Heart left ventricle (tissue), 16 donors: ENCODE measurements at regions of chr11 and their contacts with region 1.

Region 1: GRCh38 chr11:122505304-122506006 is 150.1 kb upstream of the UBASH3B start:
- DNase-seq: peak; percentile 79 to 82 (median 80)
- ATAC-seq: peak; percentile 91 to 99 (median 98)
- H3K4me3 ChIP-seq: no peak overlapping the region
- H3K27ac ChIP-seq: no peak overlapping the region
- H3K4me1 ChIP-seq: peaks cover 0 to 11% (median 4%) of the 10 kb centered on the region in 12 donors
- H3K27me3 ChIP-seq: no peaks in the 10 kb centered on the region
- CTCF ChIP-seq: peak; percentile 73 to 93 (median 87)
- POLR2A ChIP-seq: no peak

Region 2: GRCh38 chr11:122020902-122021301 is 484.6 kb before region 1 on chr11:
- intact Hi-C with region 1: loop called in 5 of 10 experiments (anchors 2 to 10 kb)
- DNase-seq: no peak
- ATAC-seq: no peak
- H3K4me3 ChIP-seq: no peak overlapping the region
- H3K27ac ChIP-seq: no peak overlapping the region
- H3K4me1 ChIP-seq: peaks cover 0 to 9% (median 0%) of the 10 kb centered on the region in 12 donors
- H3K27me3 ChIP-seq: no peaks in the 10 kb centered on the region
- CTCF ChIP-seq: peak; percentile 19 to 61 (median 44)
- POLR2A ChIP-seq: no peak

Region 3: DNA sequence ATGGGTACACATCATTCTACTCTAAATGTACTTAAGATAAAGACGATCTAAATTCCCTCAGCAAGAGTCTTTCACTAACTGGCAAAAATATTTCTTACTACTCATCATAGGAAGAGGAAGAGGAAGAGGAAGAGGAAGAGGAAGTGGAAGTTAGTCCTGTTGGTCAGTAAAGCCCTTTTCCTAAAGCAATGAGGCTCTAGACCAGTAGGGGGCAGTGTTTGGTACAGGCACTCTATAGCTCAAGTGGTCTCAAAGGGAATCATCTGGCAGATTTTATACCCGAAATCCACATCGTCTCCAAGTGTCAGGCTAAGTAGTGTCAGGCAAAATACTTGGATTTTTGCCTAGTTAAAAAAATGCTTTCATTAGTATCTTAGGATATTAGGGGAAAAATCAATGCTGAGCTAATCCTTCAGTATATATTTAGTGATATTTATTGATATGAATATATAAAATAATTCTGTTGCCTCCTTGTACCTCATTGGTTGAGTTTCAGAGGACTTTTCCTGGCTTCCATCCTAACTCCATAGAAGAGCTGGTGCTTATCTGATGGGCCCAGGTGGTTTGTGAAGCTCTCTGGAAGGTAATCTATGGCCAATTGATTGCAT is 397.2 kb before region 1 on chr11:
- intact Hi-C with region 1: loop called in 9 of 10 experiments (anchors 5 to 10 kb)
- DNase-seq: no peak
- ATAC-seq: no peak
- H3K4me3 ChIP-seq: no peak overlapping the region
- H3K27ac ChIP-seq: peak overlapping the region in 10 of 12 donors; percentile 46 to 85 (median 63)
- H3K4me1 ChIP-seq: peaks cover 0 to 33% (median 10%) of the 10 kb centered on the region in 12 donors
- H3K27me3 ChIP-seq: no peaks in the 10 kb centered on the region
- CTCF ChIP-seq: peak; percentile 29 to 59 (median 46)
- POLR2A ChIP-seq: no peak

Region 4: GRCh38 chr11:122215244-122215992 is 290.0 kb before region 1 on chr11:
- intact Hi-C with region 1: loop called (anchors 1 to 5 kb)
- DNase-seq: peak; percentile 70 to 90 (median 79)
- ATAC-seq: peak; percentile 89 to 97 (median 94)
- H3K4me3 ChIP-seq: no peak overlapping the region
- H3K27ac ChIP-seq: peak overlapping the region in 9 of 12 donors; percentile 1 to 47 (median 38)
- H3K4me1 ChIP-seq: peaks cover 0 to 26% (median 10%) of the 10 kb centered on the region in 12 donors
- H3K27me3 ChIP-seq: no peaks in the 10 kb centered on the region
- CTCF ChIP-seq: peak; percentile 85 to 97 (median 94)
- POLR2A ChIP-seq: no peak

Region 5: DNA sequence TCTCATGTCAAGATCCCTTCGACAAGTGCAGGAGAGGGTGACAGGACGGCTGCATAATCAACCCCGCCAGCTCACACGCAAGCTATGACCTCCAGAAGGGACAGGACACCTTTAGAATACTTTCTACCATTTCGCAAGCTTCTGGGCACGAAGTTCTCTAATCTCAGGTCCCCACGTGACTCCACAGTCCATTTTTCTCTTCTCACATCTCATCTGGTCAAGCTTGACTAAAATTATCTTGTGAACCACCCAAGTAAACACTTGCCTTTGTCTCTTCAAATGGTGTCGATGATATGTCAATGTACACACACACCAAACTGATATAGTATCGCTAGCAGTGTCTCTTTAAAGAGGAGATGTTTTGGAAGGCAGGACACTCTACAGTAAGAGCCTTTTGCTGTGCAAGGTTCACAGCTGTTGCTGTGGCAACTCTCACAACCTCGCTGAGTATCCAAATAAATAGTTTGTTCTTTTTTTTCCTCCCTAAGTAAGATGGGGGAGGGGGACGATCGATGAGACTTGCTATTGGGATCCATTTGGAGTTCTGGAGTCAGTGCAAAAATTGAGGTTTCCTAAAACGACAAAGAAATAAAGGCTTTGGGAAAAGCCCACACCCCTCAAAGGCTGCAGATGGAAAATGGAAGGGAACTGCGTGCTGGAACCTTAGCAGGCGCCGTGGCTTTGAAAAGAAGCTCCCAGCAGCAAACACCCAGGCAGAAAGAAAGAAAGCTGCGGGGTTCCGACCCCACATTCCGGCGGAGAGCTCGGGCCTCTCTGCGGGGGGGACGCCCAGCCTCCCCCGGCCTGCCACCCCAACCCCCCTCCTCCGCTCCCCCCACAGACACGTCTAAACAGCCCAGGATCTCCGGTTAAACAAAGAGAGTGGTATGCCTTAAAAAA is 65.3 kb before region 1 on chr11:
- intact Hi-C with region 1: no loop called
- DNase-seq: peak in 4 of 5 donors; percentile 17 to 75 (median 40)
- ATAC-seq: peak; percentile 66 to 91 (median 84)
- H3K4me3 ChIP-seq: peak overlapping the region; percentile 14 to 75 (median 58)
- H3K27ac ChIP-seq: peak overlapping the region; percentile 40 to 83 (median 66)
- H3K4me1 ChIP-seq: peaks cover 0 to 27% (median 5%) of the 10 kb centered on the region in 12 donors
- H3K27me3 ChIP-seq: no peaks in the 10 kb centered on the region
- CTCF ChIP-seq: no peak
- POLR2A ChIP-seq: no peak